PC-3 (cell line): ENCODE measurements at regions of chr3 and their contacts with region 1.

Region 1: GRCh38 chr3:197906023-197906849 is 43.8 kb upstream of the RPL35A start:
- DNase-seq: peak; percentile 95
- ATAC-seq: peak; percentile 99
- H3K4me3 ChIP-seq: no peak overlapping the region
- H3K27ac ChIP-seq: peak overlapping the region; percentile 38
- H3K4me1 ChIP-seq: peaks cover 12% of the 10 kb centered on the region
- H3K27me3 ChIP-seq: no peaks in the 10 kb centered on the region
- CTCF ChIP-seq: peak; percentile 97

Region 2: DNA sequence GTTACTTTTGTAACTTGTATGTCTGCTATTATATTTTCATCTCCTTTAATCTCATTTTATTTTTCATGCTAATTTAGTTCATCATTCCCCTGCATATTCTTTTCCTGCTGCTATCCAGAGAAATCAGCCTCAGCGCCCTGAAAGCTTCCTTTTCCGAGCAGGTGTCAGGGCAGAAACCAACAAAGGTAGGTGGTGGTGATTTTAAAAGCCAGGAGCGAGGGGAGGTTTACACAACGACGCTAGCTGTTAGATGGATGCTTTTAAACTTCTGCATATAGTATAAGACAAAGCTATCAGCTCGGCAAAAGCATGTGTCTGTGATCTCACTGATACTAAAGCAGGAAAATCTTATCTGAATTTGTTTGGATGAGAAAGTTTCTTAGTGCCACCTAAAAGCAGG is 40.2 kb before region 1 on chr3:
- CTCF ChIA-PET with region 1: no interaction called
- POLR2A ChIA-PET with region 1: no interaction called
- intact Hi-C with region 1: no loop called
- DNase-seq: no peak
- ATAC-seq: no peak
- H3K4me3 ChIP-seq: no peak overlapping the region
- H3K27ac ChIP-seq: no peak overlapping the region
- H3K4me1 ChIP-seq: no peaks in the 10 kb centered on the region
- H3K27me3 ChIP-seq: no peaks in the 10 kb centered on the region
- CTCF ChIP-seq: no peak

Region 3: GRCh38 chr3:197942956-197943556 is 36.8 kb after region 1 on chr3:
- CTCF ChIA-PET with region 1: interaction called, 7 read pairs
- POLR2A ChIA-PET with region 1: no interaction called
- intact Hi-C with region 1: loop called (anchors 1 kb)
- DNase-seq: peak; percentile 73
- ATAC-seq: peak; percentile 78
- H3K4me3 ChIP-seq: no peak overlapping the region
- H3K27ac ChIP-seq: no peak overlapping the region
- H3K4me1 ChIP-seq: no peaks in the 10 kb centered on the region
- H3K27me3 ChIP-seq: no peaks in the 10 kb centered on the region
- CTCF ChIP-seq: peak; percentile 86

Region 4: DNA sequence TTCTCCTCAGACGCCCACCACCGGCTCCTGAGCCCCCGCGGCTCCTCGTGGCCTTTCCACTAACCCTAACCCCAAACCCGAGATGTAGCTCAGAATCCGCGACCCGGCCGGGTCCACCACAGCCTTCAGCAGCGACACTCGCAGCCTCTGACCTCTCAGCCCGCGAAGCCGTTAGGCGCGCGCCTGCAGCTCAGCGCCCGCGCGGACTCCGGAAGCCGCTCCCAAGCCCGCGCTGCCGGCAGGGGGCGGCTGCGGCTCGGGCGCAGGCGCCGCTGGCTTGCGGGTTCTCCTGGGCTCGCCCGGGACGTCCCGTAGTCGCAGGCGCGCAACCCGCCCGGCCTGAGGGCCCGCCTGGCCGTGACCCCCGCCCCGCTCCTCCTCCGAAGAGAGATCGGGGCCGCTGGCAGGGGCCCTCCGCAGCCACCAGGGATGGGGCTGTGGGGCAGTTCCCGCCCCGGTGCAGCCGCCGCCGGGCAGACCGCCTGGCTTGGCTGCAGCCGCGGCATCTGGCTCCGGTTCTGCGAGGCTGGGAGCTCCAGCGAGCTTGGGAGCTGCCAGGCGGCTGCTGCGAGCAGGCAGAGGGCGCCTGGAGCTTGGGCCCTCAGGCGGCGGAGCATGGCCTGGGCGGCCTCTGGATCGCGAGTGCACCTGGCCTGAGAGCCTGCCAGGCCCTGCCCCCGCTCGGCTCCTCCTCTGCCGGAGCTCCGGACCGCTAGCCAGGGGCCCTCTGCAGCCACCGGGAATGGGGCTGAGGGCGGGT is 174.5 kb after region 1 on chr3:
- CTCF ChIA-PET with region 1: interaction called, 7 read pairs
- POLR2A ChIA-PET with region 1: no interaction called
- intact Hi-C with region 1: loop called (anchors 2 kb)
- DNase-seq: peak; percentile 87
- ATAC-seq: peak; percentile 89
- H3K4me3 ChIP-seq: peak overlapping the region; percentile 60
- H3K27ac ChIP-seq: no peak overlapping the region
- H3K4me1 ChIP-seq: peaks cover 12% of the 10 kb centered on the region; the same call in 1 of the 2 replicates
- H3K27me3 ChIP-seq: peaks cover 74% of the 10 kb centered on the region
- CTCF ChIP-seq: peak; percentile 62